MCF 10A (cell line): ENCODE measurements at regions of chr19 and their contacts with region 1.

Region 1: DNA sequence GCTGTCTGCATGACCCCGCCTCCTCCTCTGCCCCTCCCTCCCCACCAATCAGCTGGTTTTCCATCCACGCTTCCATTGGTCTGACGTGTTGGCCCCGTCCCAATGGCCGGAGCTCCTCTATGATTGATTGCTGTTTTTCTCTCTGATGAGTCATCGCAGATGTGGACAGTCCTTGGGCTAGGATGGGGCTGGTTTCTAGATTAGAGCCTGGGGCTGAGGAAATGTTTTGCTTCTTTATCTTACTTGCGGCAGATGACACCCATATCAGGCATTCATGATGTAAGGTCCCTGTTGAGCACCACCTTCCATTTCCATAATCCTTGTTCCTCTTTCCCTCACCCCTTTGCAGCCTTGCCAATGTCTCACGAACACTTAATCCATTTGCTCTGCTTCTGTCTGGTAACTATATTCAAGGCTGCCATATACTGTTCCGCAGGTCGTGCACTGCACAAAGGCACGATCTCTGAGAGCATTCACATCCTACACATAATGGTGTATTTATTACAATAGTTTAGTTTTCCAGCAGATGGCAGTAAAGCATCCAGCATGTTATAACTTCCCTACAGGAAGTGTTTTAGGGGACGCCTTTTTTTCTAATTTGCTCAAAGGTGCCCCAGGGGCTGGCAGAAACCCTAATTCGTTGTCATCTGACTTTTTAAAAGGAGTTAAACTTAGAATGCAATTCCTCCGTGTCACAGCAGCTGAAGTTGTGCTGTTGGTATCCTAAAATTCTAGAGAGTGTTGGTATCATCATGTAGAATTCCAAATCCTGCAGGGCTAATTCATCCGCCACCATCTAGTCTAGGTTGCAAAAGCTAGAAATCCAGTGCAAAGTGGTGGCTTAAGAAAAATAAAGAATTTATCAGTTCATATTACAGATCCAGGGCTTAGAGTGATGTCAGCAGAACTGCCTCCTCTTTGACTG is 73.5 kb downstream of the MAP4K1 start:
- DNase-seq: peak; percentile 93
- H3K4me3 Mint-ChIP-seq: peak overlapping the region; percentile 56
- H3K27ac Mint-ChIP-seq: no peak overlapping the region
- H3K4me1 Mint-ChIP-seq: peaks cover 12% of the 10 kb centered on the region
- H3K27me3 Mint-ChIP-seq: no peaks in the 10 kb centered on the region
- CTCF ChIP-seq: peak; percentile 66

Region 2: DNA sequence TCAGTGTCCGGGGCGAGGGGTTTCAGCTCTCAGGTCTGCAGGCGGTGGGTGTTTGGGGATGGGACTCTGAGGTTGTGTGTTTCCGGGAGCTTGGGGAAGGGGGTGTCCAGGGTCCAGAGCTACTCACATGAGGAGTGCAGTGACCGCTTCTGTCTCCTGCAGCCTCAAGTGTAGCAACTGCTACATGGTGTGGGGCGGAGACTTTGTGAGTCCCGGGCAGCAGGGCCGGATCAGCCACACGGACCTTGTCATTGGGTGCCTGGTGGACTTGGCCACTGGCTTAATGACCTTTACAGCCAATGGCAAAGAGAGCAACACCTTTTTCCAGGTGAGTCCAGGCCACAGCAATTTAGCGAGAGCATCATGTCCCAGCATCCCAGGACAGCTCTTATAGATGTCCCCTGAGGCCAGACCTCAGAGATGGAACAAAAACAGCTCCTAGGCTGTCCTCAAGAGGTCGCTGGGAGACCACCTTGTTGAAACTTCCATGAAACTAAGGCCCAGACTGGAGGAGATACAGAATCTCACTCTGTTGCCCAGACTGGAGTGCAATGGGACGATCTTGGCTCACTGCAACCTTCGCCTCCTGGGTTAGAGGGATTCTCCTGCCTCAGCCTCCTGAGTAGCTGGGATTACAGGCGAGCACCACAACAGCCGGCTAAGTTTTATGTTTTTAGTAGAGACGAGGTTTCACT is 65.9 kb before region 1 on chr19:
- CTCF ChIA-PET with region 1: no interaction called
- POLR2A ChIA-PET with region 1: no interaction called
- intact Hi-C with region 1: no loop called
- DNase-seq: peak; percentile 28
- H3K4me3 Mint-ChIP-seq: no peak overlapping the region
- H3K27ac Mint-ChIP-seq: no peak overlapping the region
- H3K4me1 Mint-ChIP-seq: no peaks in the 10 kb centered on the region
- H3K27me3 Mint-ChIP-seq: peaks cover 16% of the 10 kb centered on the region
- CTCF ChIP-seq: no peak

Region 3: DNA sequence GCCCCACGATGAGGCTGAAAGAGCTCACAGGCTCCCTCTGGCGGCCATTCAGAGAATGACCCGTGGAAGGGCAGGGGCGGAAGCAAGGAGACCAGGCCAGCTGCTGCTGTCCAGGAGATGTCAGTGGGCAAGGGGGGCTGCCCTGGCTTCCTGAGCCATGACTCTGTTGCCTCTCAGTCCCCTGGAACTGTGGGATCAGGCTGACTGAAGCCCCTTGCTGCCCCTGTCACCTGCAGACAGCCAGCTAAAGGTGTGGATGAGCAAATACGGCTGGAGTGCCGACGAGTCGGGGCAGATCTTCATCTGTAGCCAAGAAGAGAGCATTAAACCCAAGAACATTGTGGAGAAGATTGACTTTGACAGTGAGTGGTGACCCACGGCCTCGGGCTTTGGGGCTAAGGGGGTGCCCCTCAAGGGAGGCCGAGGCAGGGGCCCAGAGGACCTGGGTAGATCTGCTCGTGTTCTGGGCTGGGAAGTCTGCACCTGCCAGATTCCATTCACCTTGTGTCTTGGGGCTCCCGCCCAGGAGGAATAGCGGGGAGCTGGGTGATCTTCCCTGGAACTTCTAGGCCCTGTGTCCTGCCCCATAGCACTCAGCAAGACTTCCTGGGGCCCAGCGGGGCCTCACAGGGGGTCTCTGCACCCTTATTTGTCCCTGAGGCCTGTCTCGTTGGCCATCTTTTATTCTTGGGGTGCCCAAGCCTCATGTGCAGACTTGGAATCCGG is 90.6 kb after region 1 on chr19:
- CTCF ChIA-PET with region 1: interaction called, 37 read pairs
- POLR2A ChIA-PET with region 1: interaction called, 53 read pairs
- intact Hi-C with region 1: loop called (anchors 1 kb)
- DNase-seq: peak; percentile 80
- H3K4me3 Mint-ChIP-seq: no peak overlapping the region
- H3K27ac Mint-ChIP-seq: peak overlapping the region; percentile 24
- H3K4me1 Mint-ChIP-seq: peaks cover 17% of the 10 kb centered on the region
- H3K27me3 Mint-ChIP-seq: no peaks in the 10 kb centered on the region
- CTCF ChIP-seq: peak; percentile 91